Endothelial cell of umbilical vein (primary cell): ENCODE measurements at regions of chr15 and their contacts with region 1.

Region 1: DNA sequence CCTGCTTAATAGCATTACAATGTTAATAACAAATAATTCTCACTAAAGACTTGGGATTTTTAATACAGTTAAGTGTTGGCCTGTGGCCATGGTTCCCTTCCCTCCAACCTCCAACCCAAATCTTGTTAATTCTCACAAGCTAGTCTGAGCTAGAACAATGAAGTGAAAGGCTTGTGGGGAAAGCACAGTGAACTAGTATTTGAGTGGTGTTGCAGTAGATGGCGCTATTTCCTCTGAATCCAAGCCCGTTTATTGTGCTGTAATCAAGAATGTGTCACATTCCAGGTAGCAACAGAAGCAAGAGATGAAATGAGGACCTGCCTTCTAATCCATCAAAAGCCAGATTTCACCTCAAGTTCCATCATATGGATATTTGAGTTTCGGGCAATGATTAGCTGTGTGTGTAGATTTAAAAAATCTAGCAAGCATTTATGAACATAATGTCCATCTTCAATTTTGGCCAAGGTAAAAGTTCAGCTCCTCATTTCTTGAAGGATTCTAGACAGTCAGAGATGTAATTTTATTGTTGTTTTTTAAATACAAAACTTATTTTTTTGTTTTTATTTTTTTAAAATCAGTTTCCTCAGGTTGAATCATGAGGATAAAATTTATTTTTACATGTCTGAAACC is 160.7 kb downstream of the SQOR start:
- DNase-seq: peak; percentile 78
- H3K4me3 ChIP-seq: no peak overlapping the region
- H3K27ac ChIP-seq: no peak overlapping the region
- H3K4me1 ChIP-seq: no peaks in the 10 kb centered on the region
- H3K27me3 ChIP-seq: peaks cover 10 to 12% of the 10 kb centered on the region in 2 experiments
- CTCF ChIP-seq: peak; percentile 68 to 72
- POLR2A ChIP-seq: no peak

Region 2: GRCh38 chr15:45361878-45362277 is 433.7 kb before region 1 on chr15:
- CTCF ChIA-PET with region 1: no interaction called
- POLR2A ChIA-PET with region 1: no interaction called
- dilution Hi-C with region 1: no loop called
- intact Hi-C with region 1: no loop called
- DNase-seq: no peak
- H3K4me3 ChIP-seq: no peak overlapping the region
- H3K27ac ChIP-seq: no peak overlapping the region
- H3K4me1 ChIP-seq: no peaks in the 10 kb centered on the region
- H3K27me3 ChIP-seq: no peaks in the 10 kb centered on the region
- CTCF ChIP-seq: no peak
- POLR2A ChIP-seq: no peak

Region 3: GRCh38 chr15:45919806-45920205 is 124.3 kb after region 1 on chr15:
- CTCF ChIA-PET with region 1: interaction called, 17 read pairs
- POLR2A ChIA-PET with region 1: no interaction called
- dilution Hi-C with region 1: no loop called
- intact Hi-C with region 1: loop called (anchors 1 kb)
- DNase-seq: peak; percentile 93
- H3K4me3 ChIP-seq: peak overlapping the region in 1 of 3 experiments; percentile 18
- H3K27ac ChIP-seq: peak overlapping the region; percentile 94
- H3K4me1 ChIP-seq: peaks cover 30% of the 10 kb centered on the region
- H3K27me3 ChIP-seq: no peaks in the 10 kb centered on the region
- CTCF ChIP-seq: no peak
- POLR2A ChIP-seq: no peak

Region 4: DNA sequence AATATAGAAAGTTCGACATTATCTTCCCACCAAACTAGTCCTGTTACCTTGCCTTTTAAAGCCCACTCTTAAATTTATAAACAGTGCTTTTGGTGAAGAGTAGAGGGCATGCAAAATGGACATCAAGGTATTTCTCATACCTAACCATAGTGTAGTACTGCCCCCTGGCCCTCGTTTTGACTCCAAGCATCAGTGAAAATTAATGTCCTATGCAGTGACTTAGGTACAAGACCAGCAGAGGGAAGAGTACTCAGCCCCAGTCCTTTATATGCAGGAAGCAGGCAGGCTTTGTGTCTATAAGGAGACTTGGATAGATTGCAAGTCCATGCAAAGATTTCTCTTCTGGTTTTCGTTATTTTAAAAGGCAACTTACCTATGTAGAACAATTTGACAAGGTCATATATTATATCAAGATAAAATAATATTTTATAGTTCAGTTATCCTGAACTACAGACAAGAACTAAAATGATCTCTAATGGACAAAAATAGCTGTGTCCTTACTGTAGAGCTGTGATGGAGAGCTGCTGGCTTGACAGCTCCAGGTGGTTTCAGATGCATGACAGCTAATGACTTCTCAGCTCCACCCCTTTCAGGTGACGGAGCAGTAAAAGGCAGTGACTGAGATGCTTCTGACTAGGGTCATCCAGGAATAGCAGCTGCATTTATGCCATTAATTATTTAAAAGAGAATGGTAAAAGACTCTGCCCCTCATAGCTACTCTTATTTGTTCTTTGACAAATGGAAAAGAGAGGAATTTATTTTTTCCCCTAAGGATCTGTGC is 485.4 kb after region 1 on chr15:
- CTCF ChIA-PET with region 1: interaction called, 33 read pairs
- POLR2A ChIA-PET with region 1: no interaction called
- dilution Hi-C with region 1: no loop called
- intact Hi-C with region 1: loop called (anchors 1 kb)
- DNase-seq: peak; percentile 61
- H3K4me3 ChIP-seq: no peak overlapping the region
- H3K27ac ChIP-seq: no peak overlapping the region
- H3K4me1 ChIP-seq: no peaks in the 10 kb centered on the region
- H3K27me3 ChIP-seq: no peaks in the 10 kb centered on the region
- CTCF ChIP-seq: peak; percentile 12 to 34
- POLR2A ChIP-seq: no peak

Region 5: GRCh38 chr15:46304320-46304719 is 508.8 kb after region 1 on chr15:
- CTCF ChIA-PET with region 1: interaction called, 48 read pairs
- POLR2A ChIA-PET with region 1: no interaction called
- dilution Hi-C with region 1: no loop called
- intact Hi-C with region 1: loop called (anchors 1 kb)
- DNase-seq: peak; percentile 7
- H3K4me3 ChIP-seq: no peak overlapping the region
- H3K27ac ChIP-seq: no peak overlapping the region
- H3K4me1 ChIP-seq: no peaks in the 10 kb centered on the region
- H3K27me3 ChIP-seq: no peaks in the 10 kb centered on the region
- CTCF ChIP-seq: peak; percentile 46 to 50
- POLR2A ChIP-seq: no peak